CD8-positive, alpha-beta T cell (primary cell): ENCODE measurements at regions of chr15 and their contacts with region 1.

Region 1: DNA sequence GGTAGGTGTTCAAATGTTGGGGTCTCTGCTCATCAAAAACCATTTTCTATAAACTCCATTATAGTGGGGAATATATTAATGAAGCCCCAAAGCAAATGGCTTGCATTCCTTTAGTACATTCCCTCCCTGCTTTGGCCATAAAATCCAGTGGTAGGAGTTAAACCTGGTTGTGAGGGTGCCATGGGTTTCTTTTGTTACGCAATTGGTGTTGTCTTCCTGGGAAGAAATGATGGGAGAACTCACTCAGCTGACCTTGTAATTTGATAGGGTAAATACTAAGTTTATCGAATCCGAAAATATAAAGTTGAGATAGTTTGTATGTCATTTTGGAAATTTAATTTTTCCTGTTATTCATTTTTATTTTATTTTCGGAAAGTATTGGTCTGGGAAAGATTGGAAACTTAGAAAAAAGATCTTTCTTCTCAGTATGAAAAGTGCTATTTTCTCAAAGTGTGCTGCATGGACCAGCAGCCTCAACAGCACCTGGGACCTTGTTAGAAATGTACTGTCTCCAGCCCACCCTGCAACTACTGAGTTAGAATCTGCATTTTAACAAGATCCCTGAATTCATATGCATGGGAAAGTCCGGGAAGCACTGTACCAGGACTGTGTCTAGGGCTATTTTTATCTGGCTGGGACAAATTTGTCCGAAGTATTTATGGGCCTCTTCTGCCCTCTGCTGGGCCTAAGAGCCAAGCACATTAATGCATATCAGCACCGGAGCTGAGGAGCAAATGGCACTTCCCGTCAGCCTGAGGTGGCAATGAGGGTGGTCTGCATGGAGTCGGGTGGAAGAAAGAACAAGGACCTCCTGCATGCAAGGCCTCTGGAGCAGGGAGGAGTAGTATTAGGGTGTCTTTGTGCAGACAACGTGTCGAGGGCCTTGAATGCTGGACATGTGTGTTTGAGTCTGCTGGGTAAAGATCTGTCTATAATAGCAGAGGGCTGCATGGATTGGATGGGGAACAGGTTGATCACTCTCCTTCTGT is 54.7 kb downstream of the FAM81A start:
- DNase-seq: peak; percentile 17 to 79 (median 57)
- ATAC-seq: peak; percentile 81
- H3K4me3 ChIP-seq: no peak overlapping the region
- H3K4me3 Mint-ChIP-seq: no peak overlapping the region
- H3K27ac ChIP-seq: no peak overlapping the region
- H3K27ac Mint-ChIP-seq: no peak overlapping the region
- H3K4me1 ChIP-seq: no peaks in the 10 kb centered on the region
- H3K4me1 Mint-ChIP-seq: peaks cover 3% of the 10 kb centered on the region
- H3K27me3 ChIP-seq: no peaks in the 10 kb centered on the region
- H3K27me3 Mint-ChIP-seq: no peaks in the 10 kb centered on the region
- CTCF ChIP-seq: peak; percentile 88

Region 2: GRCh38 chr15:58227706-58228543 is 1264.8 kb before region 1 on chr15:
- CTCF ChIA-PET with region 1: interaction called, 3 read pairs
- POLR2A ChIA-PET with region 1: no interaction called
- intact Hi-C with region 1: loop called (anchors 1 to 5 kb)
- DNase-seq: peak; percentile 10 to 76 (median 62)
- ATAC-seq: no peak
- H3K4me3 ChIP-seq: no peak overlapping the region
- H3K4me3 Mint-ChIP-seq: no peak overlapping the region
- H3K27ac ChIP-seq: no peak overlapping the region
- H3K27ac Mint-ChIP-seq: no peak overlapping the region
- H3K4me1 ChIP-seq: no peaks in the 10 kb centered on the region
- H3K4me1 Mint-ChIP-seq: peaks cover 14% of the 10 kb centered on the region
- H3K27me3 ChIP-seq: no peaks in the 10 kb centered on the region
- H3K27me3 Mint-ChIP-seq: peaks cover 5% of the 10 kb centered on the region
- CTCF ChIP-seq: peak; percentile 87

Region 3: DNA sequence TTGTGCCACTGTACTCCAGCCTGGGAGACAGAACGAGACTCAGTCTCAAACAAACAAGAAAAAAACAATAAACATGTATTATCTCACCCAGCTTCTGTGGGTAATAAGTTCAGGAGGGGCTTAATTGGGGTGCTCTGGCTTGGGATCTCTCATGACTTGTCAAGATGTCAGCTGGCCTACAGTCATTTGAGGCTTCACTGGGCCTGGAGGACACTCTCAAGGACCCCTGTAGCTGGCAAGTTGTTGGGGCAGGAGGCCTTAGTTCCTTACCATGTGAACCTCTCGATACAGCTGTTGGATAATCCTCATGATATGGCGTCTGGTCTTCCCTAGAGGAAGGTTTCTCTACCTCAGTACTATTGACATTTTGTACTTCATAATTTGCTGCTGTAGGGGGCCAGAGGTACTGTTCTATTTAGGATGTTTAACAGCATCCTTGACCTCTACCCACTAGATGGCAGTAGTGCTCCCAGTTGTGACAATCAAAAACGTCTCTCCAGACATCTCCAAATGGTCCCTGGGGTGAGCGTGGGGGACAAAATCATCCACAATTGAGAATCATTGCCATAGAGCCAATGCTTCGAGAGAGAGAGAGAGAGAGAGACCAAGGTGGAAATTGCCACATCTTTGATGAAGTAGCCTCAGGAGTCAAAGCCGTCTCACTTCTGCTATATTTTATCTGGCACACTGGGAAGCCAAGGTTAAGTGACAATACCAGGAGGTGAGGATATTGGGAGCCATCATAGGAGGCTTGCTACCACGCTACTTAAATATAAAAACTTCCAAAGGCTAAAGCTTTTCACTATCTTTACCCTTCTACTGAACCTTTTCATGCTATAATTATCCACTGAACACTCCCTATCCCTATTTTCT is 535.3 kb before region 1 on chr15:
- CTCF ChIA-PET with region 1: interaction called, 39 read pairs
- POLR2A ChIA-PET with region 1: no interaction called
- intact Hi-C with region 1: loop called (anchors 1 kb)
- DNase-seq: peak; percentile 18 to 84 (median 61)
- ATAC-seq: peak; percentile 96
- H3K4me3 ChIP-seq: no peak overlapping the region
- H3K4me3 Mint-ChIP-seq: no peak overlapping the region
- H3K27ac ChIP-seq: no peak overlapping the region
- H3K27ac Mint-ChIP-seq: no peak overlapping the region
- H3K4me1 ChIP-seq: no peaks in the 10 kb centered on the region
- H3K4me1 Mint-ChIP-seq: peaks cover 10% of the 10 kb centered on the region
- H3K27me3 ChIP-seq: no peaks in the 10 kb centered on the region
- H3K27me3 Mint-ChIP-seq: no peaks in the 10 kb centered on the region
- CTCF ChIP-seq: peak; percentile 82

Region 4: DNA sequence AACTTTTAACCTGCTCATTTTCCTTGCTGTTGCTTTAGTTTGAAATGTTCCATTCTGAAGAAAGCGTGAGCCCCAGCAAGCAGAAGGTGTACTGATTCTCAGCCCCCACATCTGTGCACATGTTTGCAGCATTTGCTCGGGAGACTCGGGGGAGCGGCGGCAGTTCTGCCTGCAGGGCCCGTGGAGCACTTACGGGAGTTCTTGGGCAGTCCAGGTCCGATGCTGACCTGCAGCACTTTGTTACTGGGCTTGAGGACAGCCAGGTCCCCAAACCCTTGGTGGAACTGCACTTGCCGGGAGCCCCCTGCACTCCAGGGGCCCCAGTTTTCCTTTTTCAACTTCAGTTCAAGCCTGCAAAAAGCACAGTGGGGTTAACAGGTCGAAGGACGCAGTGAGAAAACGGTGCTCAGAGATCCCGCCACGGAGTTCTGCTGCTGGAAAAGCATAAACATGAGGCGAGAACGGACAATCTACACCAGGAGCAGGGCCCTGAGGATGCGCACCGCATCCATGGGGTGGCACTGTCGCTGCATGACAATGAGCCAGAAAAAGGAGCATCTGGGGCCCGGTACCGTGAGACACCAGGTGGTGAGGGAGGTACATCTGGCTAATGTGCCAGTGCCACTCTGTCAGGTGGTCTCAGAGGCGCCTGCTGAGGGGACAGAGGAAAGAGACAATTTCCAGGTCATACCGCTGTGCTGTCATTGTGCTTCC is 331.6 kb before region 1 on chr15:
- CTCF ChIA-PET with region 1: interaction called, 4 read pairs
- POLR2A ChIA-PET with region 1: no interaction called
- intact Hi-C with region 1: loop called in 1 of 2 experiments (anchors 1 kb)
- DNase-seq: peak in 2 of 9 experiments; percentile 30 to 31
- ATAC-seq: no peak
- H3K4me3 ChIP-seq: no peak overlapping the region
- H3K4me3 Mint-ChIP-seq: no peak overlapping the region
- H3K27ac ChIP-seq: no peak overlapping the region
- H3K27ac Mint-ChIP-seq: no peak overlapping the region
- H3K4me1 ChIP-seq: no peaks in the 10 kb centered on the region
- H3K4me1 Mint-ChIP-seq: no peaks in the 10 kb centered on the region
- H3K27me3 ChIP-seq: no peaks in the 10 kb centered on the region
- H3K27me3 Mint-ChIP-seq: no peaks in the 10 kb centered on the region
- CTCF ChIP-seq: no peak

Region 5: GRCh38 chr15:59268168-59268979 is 224.3 kb before region 1 on chr15:
- CTCF ChIA-PET with region 1: no interaction called
- POLR2A ChIA-PET with region 1: no interaction called
- intact Hi-C with region 1: no loop called
- DNase-seq: no peak
- ATAC-seq: no peak
- H3K4me3 ChIP-seq: no peak overlapping the region
- H3K4me3 Mint-ChIP-seq: no peak overlapping the region
- H3K27ac ChIP-seq: no peak overlapping the region
- H3K27ac Mint-ChIP-seq: no peak overlapping the region
- H3K4me1 ChIP-seq: no peaks in the 10 kb centered on the region
- H3K4me1 Mint-ChIP-seq: no peaks in the 10 kb centered on the region
- H3K27me3 ChIP-seq: no peaks in the 10 kb centered on the region
- H3K27me3 Mint-ChIP-seq: peaks cover 5% of the 10 kb centered on the region
- CTCF ChIP-seq: no peak

Region 6: GRCh38 chr15:59473226-59473625 is 19.5 kb before region 1 on chr15:
- CTCF ChIA-PET with region 1: interaction called, 12 read pairs
- POLR2A ChIA-PET with region 1: no interaction called
- intact Hi-C with region 1: no loop called
- DNase-seq: no peak
- ATAC-seq: no peak
- H3K4me3 ChIP-seq: no peak overlapping the region
- H3K4me3 Mint-ChIP-seq: no peak overlapping the region
- H3K27ac ChIP-seq: no peak overlapping the region
- H3K27ac Mint-ChIP-seq: no peak overlapping the region
- H3K4me1 ChIP-seq: no peaks in the 10 kb centered on the region
- H3K4me1 Mint-ChIP-seq: no peaks in the 10 kb centered on the region
- H3K27me3 ChIP-seq: no peaks in the 10 kb centered on the region
- H3K27me3 Mint-ChIP-seq: peaks cover 8% of the 10 kb centered on the region
- CTCF ChIP-seq: no peak